HepG2 (cell line): ENCODE measurements at regions of chr3 and their contacts with region 1.

Region 1: DNA sequence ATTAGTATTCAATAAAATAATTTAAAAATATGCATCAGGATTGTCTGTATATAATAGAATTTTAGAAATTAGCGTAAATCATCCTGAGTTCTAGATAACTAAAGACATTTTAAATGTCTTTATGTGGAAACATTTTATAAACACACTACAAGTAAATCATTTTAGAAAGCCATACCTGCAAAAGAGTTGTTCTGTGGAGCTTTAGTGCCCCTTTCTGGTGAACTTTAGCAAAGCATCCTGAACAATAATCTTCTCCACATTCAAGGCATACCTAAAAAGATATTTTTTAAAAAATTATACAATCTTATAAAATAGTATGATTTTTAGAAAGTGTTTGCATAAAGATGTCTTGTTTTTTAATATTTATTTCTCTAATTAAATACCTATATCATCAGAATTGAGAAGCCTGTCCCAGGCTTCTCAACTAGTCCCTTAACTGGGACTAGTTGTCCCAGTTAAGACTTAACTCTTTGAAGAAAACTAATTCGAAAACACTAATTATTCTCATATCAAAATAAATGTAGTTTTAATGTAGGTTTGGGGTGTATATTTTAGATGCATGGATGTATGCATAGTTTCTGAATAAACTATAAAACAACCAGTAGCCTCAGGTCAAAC is 29.7 kb downstream of the ZBBX start:
- DNase-seq: peak; percentile 5
- ATAC-seq: no peak
- H3K4me3 ChIP-seq: no peak overlapping the region
- H3K27ac ChIP-seq: no peak overlapping the region
- H3K4me1 ChIP-seq: no peaks in the 10 kb centered on the region
- H3K27me3 ChIP-seq: no peaks in the 10 kb centered on the region
- CTCF ChIP-seq: peak; percentile 51
- EP300 ChIP-seq: no peak
- POLR2A ChIP-seq: no peak
- RAD21 ChIP-seq: peak; percentile 22; the same call in 1 of the 2 replicates

Region 2: GRCh38 chr3:165854696-165855095 is 1495.7 kb before region 1 on chr3:
- CTCF ChIA-PET with region 1: no interaction called
- POLR2A ChIA-PET with region 1: no interaction called
- in situ Hi-C with region 1: loop called (anchors 25 kb)
- intact Hi-C with region 1: loop called (anchors 5 kb)
- DNase-seq: peak; percentile 1
- ATAC-seq: no peak
- H3K4me3 ChIP-seq: no peak overlapping the region
- H3K27ac ChIP-seq: no peak overlapping the region
- H3K4me1 ChIP-seq: no peaks in the 10 kb centered on the region
- H3K27me3 ChIP-seq: no peaks in the 10 kb centered on the region
- CTCF ChIP-seq: peak; percentile 57
- EP300 ChIP-seq: no peak
- POLR2A ChIP-seq: no peak
- RAD21 ChIP-seq: no peak

Region 3: GRCh38 chr3:166560253-166560652 is 790.1 kb before region 1 on chr3:
- CTCF ChIA-PET with region 1: no interaction called
- POLR2A ChIA-PET with region 1: no interaction called
- in situ Hi-C with region 1: no loop called
- intact Hi-C with region 1: loop called (anchors 5 kb)
- DNase-seq: peak; percentile 3
- ATAC-seq: peak; percentile 58; the same call in 2 of the 3 replicates
- H3K4me3 ChIP-seq: no peak overlapping the region
- H3K27ac ChIP-seq: no peak overlapping the region
- H3K4me1 ChIP-seq: no peaks in the 10 kb centered on the region
- H3K27me3 ChIP-seq: no peaks in the 10 kb centered on the region
- CTCF ChIP-seq: peak; percentile 37
- EP300 ChIP-seq: no peak
- POLR2A ChIP-seq: no peak
- RAD21 ChIP-seq: no peak

Region 4: DNA sequence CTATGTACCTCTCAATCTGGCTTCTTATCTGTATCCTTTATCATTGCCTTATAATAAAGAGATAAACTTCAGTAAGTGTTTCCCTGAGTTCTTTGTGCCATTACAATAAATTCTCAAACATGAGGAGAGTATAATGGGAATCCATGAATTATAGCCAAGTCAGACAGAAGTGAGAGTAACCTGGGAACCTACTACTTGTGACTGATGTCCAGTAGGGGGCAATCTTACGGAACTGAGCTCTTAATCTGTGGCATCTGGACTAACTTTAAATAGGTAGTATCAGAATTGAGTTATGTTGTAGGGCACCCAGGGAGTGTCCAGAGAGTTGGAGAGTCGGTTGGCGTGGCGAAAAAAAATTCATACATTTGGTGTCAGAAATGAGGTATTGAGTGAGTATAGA is 512.8 kb before region 1 on chr3:
- CTCF ChIA-PET with region 1: no interaction called
- POLR2A ChIA-PET with region 1: no interaction called
- in situ Hi-C with region 1: no loop called
- intact Hi-C with region 1: loop called (anchors 5 kb)
- DNase-seq: peak; percentile 32
- ATAC-seq: peak; percentile 95
- H3K4me3 ChIP-seq: no peak overlapping the region
- H3K27ac ChIP-seq: no peak overlapping the region
- H3K4me1 ChIP-seq: no peaks in the 10 kb centered on the region
- H3K27me3 ChIP-seq: no peaks in the 10 kb centered on the region
- CTCF ChIP-seq: peak; percentile 61
- EP300 ChIP-seq: no peak
- POLR2A ChIP-seq: no peak
- RAD21 ChIP-seq: no peak

Region 5: GRCh38 chr3:167102071-167102470 is 248.3 kb before region 1 on chr3:
- CTCF ChIA-PET with region 1: no interaction called
- POLR2A ChIA-PET with region 1: no interaction called
- in situ Hi-C with region 1: no loop called
- intact Hi-C with region 1: loop called (anchors 5 kb)
- DNase-seq: peak; percentile 3
- ATAC-seq: no peak
- H3K4me3 ChIP-seq: no peak overlapping the region
- H3K27ac ChIP-seq: no peak overlapping the region
- H3K4me1 ChIP-seq: no peaks in the 10 kb centered on the region
- H3K27me3 ChIP-seq: no peaks in the 10 kb centered on the region; a peak in 1 of 5 replicates
- CTCF ChIP-seq: peak; percentile 21
- EP300 ChIP-seq: no peak
- POLR2A ChIP-seq: no peak
- RAD21 ChIP-seq: no peak

Region 6: DNA sequence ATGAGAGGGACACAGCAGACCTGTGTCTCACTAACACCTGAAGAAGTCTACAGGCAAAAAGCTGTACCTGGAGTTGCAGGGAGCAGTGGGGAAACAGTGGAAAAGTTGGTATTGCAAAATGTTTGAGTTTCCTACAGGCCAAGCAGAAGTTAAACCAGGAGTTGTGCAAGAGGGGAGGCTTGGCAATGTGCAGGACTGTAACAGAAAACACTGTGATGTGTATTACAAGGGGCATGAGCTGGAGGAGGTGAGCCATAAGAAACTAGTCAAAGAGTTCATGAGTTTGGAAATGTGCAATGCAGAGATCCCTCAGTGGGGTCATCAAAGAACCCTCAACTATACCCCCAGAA is 170.6 kb after region 1 on chr3:
- CTCF ChIA-PET with region 1: no interaction called
- POLR2A ChIA-PET with region 1: no interaction called
- in situ Hi-C with region 1: no loop called
- intact Hi-C with region 1: no loop called
- DNase-seq: no peak
- ATAC-seq: no peak; the same call in 2 of the 3 replicates
- H3K4me3 ChIP-seq: no peak overlapping the region
- H3K27ac ChIP-seq: no peak overlapping the region
- H3K4me1 ChIP-seq: no peaks in the 10 kb centered on the region
- H3K27me3 ChIP-seq: no peaks in the 10 kb centered on the region
- CTCF ChIP-seq: no peak
- EP300 ChIP-seq: no peak
- POLR2A ChIP-seq: no peak
- RAD21 ChIP-seq: no peak

Region 7: DNA sequence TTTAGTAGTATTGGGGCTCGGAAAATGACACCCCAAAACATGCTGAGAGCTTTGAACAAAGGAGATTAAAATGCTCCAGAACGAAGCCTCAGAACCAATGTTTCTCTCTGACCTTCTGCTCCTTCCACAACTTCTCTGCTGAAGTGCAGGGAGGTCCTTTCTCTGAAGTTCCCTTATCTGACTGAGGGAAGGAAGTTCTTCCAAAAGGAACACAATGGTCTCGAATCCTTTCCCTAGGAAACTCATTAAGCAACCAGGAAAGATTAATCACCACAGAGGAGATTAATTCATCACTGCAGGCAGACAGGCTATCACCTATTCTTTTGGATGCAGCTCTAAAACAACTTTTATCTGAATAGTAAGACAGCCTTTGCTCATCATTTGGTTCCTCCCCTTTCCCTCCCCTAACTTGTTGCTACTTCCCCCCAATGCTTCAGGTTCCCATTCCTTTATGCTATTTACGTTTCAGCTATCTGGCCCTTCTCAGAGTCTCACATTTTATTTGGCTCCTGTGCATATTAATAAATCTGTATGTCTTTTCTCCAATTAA is 321.6 kb after region 1 on chr3:
- CTCF ChIA-PET with region 1: no interaction called
- POLR2A ChIA-PET with region 1: no interaction called
- in situ Hi-C with region 1: no loop called
- intact Hi-C with region 1: no loop called
- DNase-seq: no peak
- ATAC-seq: no peak
- H3K4me3 ChIP-seq: no peak overlapping the region
- H3K27ac ChIP-seq: no peak overlapping the region
- H3K4me1 ChIP-seq: no peaks in the 10 kb centered on the region
- H3K27me3 ChIP-seq: no peaks in the 10 kb centered on the region
- CTCF ChIP-seq: no peak
- EP300 ChIP-seq: no peak
- POLR2A ChIP-seq: no peak
- RAD21 ChIP-seq: no peak